GM18951 (cell line): ENCODE measurements at regions of chr4 and their contacts with region 1.

Region 1: GRCh38 chr4:55409468-55410171 is 13.9 kb downstream of the TMEM165 start:
- POLR2A ChIP-seq: no peak

Region 2: DNA sequence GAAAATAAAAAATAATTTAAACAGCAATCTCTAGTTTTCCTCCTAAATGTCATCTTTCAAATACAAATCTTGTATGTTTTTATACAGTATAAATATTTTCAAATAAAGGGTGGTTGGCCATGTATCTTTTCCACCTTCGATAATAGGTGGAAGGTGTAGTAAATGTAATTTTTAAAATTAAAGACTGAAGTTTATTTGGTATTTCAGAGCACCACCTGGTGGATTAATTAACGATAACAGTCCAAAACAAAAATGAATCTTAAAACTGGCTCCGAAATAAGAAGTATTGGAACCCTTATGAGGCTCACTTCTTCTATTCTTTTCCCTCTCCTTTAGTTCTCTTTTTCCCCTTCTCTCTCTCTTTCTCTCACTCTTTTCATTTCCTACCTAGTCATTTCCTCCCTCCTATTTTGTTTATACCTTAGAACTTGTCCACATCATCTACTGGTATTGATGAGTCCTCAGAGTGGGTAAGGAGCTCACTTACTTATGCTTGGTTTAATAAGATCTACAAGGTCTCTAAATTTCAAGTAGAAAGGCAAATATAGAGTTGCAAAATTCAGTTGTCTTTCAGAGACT is 327.1 kb after region 1 on chr4:
- in situ Hi-C with region 1: loop called (anchors 25 kb)
- POLR2A ChIP-seq: no peak

Region 3: GRCh38 chr4:55853484-55854046 is 443.9 kb after region 1 on chr4 and contains the start of gene EXOC1:
- in situ Hi-C with region 1: loop called (anchors 25 kb)
- POLR2A ChIP-seq: peak; percentile 83